Activated CD8-positive, alpha-beta T cell treated with anti-CD3 and anti-CD28 coated beads, Interleukin-2, amount 10 ng/mL, durations not matched to agents 7 days and 5 days (primary cell): ENCODE measurements at regions of chr11 and their contacts with region 1.

Region 1: GRCh38 chr11:123407130-123407995 is 22.7 kb upstream of the GRAMD1B start:
- DNase-seq: peak; percentile 77
- ATAC-seq: peak; percentile 85
- H3K4me3 Mint-ChIP-seq: peak overlapping the region; percentile 65
- H3K27ac Mint-ChIP-seq: no peak overlapping the region
- H3K4me1 Mint-ChIP-seq: peaks cover 30% of the 10 kb centered on the region
- H3K27me3 Mint-ChIP-seq: peaks cover 8% of the 10 kb centered on the region

Region 2: GRCh38 chr11:123357961-123358841 is 49.2 kb before region 1 on chr11:
- CTCF ChIA-PET with region 1: interaction called, 14 read pairs
- POLR2A ChIA-PET with region 1: interaction called, 4 read pairs
- DNase-seq: peak; percentile 72
- ATAC-seq: peak; percentile 92
- H3K4me3 Mint-ChIP-seq: peak overlapping the region; percentile 86
- H3K27ac Mint-ChIP-seq: peak overlapping the region; percentile 91
- H3K4me1 Mint-ChIP-seq: peaks cover 47% of the 10 kb centered on the region
- H3K27me3 Mint-ChIP-seq: peaks cover 21% of the 10 kb centered on the region

Region 3: DNA sequence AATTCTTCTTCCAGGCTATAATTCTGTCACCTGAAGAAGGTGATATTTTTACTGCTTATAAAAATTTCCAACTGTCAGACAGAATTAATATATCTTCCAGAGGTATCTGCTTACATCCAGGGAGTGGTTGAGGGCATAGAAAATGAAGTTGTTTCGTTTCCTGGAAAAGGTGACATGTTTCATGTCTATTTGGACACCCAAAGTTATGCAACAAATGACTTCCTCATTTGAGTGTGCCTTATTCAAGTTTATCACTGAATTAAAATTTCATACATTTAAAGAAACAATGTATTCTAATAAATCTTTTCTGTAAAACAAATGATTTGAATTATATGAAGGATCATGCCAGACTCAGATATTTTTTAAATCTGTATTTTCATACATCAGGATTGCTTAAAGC is 14.2 kb after region 1 on chr11:
- CTCF ChIA-PET with region 1: interaction called, 50 read pairs
- POLR2A ChIA-PET with region 1: no interaction called
- DNase-seq: no peak
- ATAC-seq: no peak
- H3K4me3 Mint-ChIP-seq: no peak overlapping the region
- H3K27ac Mint-ChIP-seq: no peak overlapping the region
- H3K4me1 Mint-ChIP-seq: peaks cover 6% of the 10 kb centered on the region
- H3K27me3 Mint-ChIP-seq: peaks cover 28% of the 10 kb centered on the region

Region 4: DNA sequence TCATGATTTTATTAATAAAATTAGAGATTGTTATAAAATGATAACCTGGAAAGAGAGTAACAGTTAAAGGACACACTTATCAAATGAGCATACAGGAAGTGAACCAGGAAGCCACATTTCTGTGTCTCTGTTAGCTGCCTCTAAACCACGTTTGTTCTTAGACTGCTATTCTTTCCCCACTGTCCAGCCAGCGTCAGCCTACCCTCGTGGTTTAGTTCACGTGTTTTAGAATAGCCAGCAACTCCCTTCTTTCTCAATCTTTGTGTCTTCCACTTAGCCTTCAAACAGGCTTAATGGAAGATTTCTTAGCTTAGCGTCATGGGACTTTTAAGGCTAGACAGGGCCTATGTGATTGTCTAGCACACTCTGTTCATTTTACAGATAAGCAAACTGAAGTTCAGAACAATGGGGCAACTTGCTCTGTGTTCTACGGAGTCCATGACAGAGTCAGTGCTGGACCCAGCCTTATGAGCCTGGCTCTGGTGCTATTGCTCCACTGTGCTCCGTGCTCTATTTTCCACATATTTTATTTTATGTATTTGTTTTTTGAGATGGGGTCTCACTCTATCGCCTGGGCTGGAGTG is 49.9 kb after region 1 on chr11:
- CTCF ChIA-PET with region 1: interaction called, 38 read pairs
- POLR2A ChIA-PET with region 1: interaction called, 3 read pairs
- DNase-seq: peak; percentile 50
- ATAC-seq: peak; percentile 73
- H3K4me3 Mint-ChIP-seq: peak overlapping the region; percentile 45
- H3K27ac Mint-ChIP-seq: peak overlapping the region; percentile 91
- H3K4me1 Mint-ChIP-seq: peaks cover 64% of the 10 kb centered on the region
- H3K27me3 Mint-ChIP-seq: no peaks in the 10 kb centered on the region

Region 5: DNA sequence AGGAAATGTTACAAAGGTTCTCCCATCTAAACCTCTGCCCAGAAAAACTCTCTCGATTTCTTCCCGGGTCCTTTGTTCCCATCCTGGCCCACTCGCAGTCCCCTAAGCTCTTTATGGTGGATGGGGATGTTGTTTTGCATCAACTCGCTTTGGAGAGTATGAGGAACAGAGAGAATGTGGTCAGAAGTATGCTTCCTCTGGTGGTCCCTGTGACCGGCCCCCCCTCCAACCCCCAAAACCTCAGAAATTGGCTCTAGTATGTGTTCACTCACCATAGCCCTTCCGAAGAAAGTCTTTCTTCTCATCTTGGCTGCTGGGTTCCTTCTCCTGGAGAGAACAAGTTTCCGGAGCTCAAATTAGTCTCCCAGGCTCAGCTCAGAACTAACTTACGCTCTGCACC is 77.1 kb after region 1 on chr11:
- CTCF ChIA-PET with region 1: interaction called, 374 read pairs
- POLR2A ChIA-PET with region 1: interaction called, 9 read pairs
- DNase-seq: no peak
- ATAC-seq: no peak
- H3K4me3 Mint-ChIP-seq: no peak overlapping the region
- H3K27ac Mint-ChIP-seq: no peak overlapping the region
- H3K4me1 Mint-ChIP-seq: peaks cover 45% of the 10 kb centered on the region
- H3K27me3 Mint-ChIP-seq: no peaks in the 10 kb centered on the region

Region 6: GRCh38 chr11:123580557-123581275 is 173.4 kb after region 1 on chr11:
- CTCF ChIA-PET with region 1: interaction called, 23 read pairs
- POLR2A ChIA-PET with region 1: no interaction called
- DNase-seq: peak; percentile 77
- ATAC-seq: peak; percentile 86
- H3K4me3 Mint-ChIP-seq: no peak overlapping the region
- H3K27ac Mint-ChIP-seq: no peak overlapping the region
- H3K4me1 Mint-ChIP-seq: peaks cover 15% of the 10 kb centered on the region
- H3K27me3 Mint-ChIP-seq: no peaks in the 10 kb centered on the region